ENCODE measurements at regions of chr6 and their contacts with region 1.

Region 1: DNA sequence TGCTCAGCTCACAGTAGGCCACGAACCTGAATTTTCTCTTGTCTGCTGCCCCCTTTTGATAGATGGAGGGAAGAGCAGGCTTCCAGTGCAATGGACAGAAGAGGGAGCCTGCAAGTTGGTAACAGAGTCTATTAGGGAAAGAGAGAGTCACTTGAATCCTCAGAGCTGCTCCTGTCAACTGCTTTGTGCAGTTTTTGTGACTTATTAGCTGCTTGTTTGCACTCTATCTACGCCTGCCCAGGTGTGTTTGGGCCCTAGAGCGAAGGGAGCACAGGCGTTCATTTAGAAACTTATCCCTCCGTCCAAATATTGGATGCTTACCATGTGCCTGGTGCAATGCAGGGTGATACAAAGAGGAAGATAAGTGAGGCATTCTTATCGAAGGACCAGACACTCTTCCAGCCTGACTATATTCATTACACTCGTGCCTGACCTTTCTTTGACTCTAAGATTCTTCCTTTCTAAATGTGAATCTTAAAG is 11.6 kb upstream of the SLC2A12 start:
- DNase-seq: peak in 2 of 3 donors; percentile 24 to 59
- ATAC-seq: peak; percentile 93 to 96 (median 94)
- H3K4me3 ChIP-seq: no peak overlapping the region
- H3K27ac ChIP-seq: no peak overlapping the region
- H3K4me1 ChIP-seq: peaks cover 0 to 3% (median 0%) of the 10 kb centered on the region in 4 donors
- H3K27me3 ChIP-seq: no peaks in the 10 kb centered on the region
- CTCF ChIP-seq: peak; percentile 71 to 82 (median 76)
- POLR2A ChIP-seq: no peak

Region 2: DNA sequence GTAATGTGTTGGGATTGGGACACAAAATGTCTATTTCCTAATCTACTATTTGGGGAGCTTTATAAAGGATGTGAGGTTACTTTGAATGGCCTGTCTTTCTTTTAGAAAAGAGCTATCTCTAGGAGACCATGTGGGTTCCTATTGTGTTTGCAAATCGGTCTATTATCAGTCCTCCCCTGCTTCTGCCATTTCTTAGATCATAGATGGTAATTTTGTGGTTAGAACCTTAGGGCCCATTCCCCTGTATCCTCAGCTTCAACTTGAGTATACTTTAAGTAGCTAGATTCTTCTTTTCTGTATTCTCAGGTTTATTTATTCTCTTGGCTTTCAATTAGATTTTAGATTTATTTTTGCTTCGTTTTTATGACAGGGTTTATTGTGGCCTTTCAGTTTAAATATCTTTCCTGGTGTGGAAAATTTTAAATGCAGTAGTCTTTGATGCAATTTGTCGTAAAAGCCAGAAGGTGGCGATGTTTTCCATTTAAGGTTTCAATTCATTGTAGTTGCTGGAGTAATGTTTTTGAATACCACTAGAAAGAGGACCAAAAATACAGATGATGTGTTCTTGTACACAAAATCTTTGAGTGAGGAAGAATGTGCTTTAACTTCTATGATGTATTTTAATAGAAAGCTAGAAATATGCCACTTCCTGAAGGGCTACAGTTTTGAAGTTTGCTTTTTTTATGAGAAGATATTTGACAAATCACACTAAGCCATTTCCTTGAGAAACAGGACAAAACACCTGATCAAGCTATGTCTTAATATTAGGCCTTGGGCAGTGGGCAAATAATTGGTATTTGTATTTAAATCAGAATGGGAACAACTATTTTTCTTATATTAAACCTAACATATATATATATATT is 90.7 kb before region 1 on chr6:
- intact Hi-C with region 1: loop called in 1 of 2 experiments (anchors 10 kb)
- DNase-seq: no peak
- ATAC-seq: peak; percentile 65 to 77 (median 70)
- H3K4me3 ChIP-seq: no peak overlapping the region
- H3K27ac ChIP-seq: no peak overlapping the region
- H3K4me1 ChIP-seq: peaks cover 0 to 19% (median 0%) of the 10 kb centered on the region in 4 donors
- H3K27me3 ChIP-seq: no peaks in the 10 kb centered on the region
- CTCF ChIP-seq: peak; percentile 71 to 74 (median 72)
- POLR2A ChIP-seq: no peak